ENCODE measurements at regions of chr9 and their contacts with region 1.

Region 1: GRCh38 chr9:123414946-123415821 is 59.2 kb downstream of the CRB2 start:
- DNase-seq: no peak
- H3K4me3 ChIP-seq: no peak overlapping the region
- H3K27ac ChIP-seq: no peak overlapping the region
- H3K4me1 ChIP-seq: no peaks in the 10 kb centered on the region
- H3K27me3 ChIP-seq: no peaks in the 10 kb centered on the region
- CTCF ChIP-seq: no peak
- POLR2A ChIP-seq: no peak

Region 2: GRCh38 chr9:121439711-121440664 is 1975.2 kb before region 1 on chr9:
- intact Hi-C with region 1: loop called (anchors 10 kb)
- DNase-seq: no peak
- H3K4me3 ChIP-seq: no peak overlapping the region
- H3K27ac ChIP-seq: no peak overlapping the region
- H3K4me1 ChIP-seq: no peaks in the 10 kb centered on the region
- H3K27me3 ChIP-seq: no peaks in the 10 kb centered on the region
- CTCF ChIP-seq: no peak
- POLR2A ChIP-seq: no peak

Measured in breast epithelium (tissue), 4 donors.